ENCODE measurements at regions of chr14 and their contacts with region 1.

Region 1: GRCh38 chr14:74945823-74946682 is 9.3 kb downstream of the PGF start:
- DNase-seq: no peak
- H3K4me3 ChIP-seq: peak overlapping the region in 3 of 4 donors; percentile 1 to 30 (median 13)
- H3K27ac ChIP-seq: peak overlapping the region; percentile 20 to 66 (median 34)
- H3K4me1 ChIP-seq: peaks cover 34 to 38% (median 36%) of the 10 kb centered on the region in 4 donors
- H3K27me3 ChIP-seq: peaks cover 0 to 18% (median 0%) of the 10 kb centered on the region in 4 donors
- CTCF ChIP-seq: peak; percentile 91 to 99 (median 92)
- EP300 ChIP-seq: no peak
- POLR2A ChIP-seq: no peak

Region 2: GRCh38 chr14:75002392-75003249 is 56.6 kb after region 1 on chr14 and contains the start of gene EIF2B2:
- intact Hi-C with region 1: loop called (anchors 5 kb)
- DNase-seq: peak; percentile 100
- H3K4me3 ChIP-seq: peak within 1 kb of the TSS; percentile 77 to 92 (median 82)
- H3K27ac ChIP-seq: peak within 1 kb of the TSS; percentile 81 to 87 (median 82)
- H3K4me1 ChIP-seq: peaks cover 15 to 34% (median 25%) of the 10 kb centered on the region in 4 donors
- H3K27me3 ChIP-seq: no peaks in the 10 kb centered on the region
- CTCF ChIP-seq: peak in 2 of 3 experiments; percentile 28 to 37
- EP300 ChIP-seq: no peak
- POLR2A ChIP-seq: no peak
- total RNA-seq, gene EIF2B2: 23.3 to 58.0 (median 45.9) TPM

Region 3: DNA sequence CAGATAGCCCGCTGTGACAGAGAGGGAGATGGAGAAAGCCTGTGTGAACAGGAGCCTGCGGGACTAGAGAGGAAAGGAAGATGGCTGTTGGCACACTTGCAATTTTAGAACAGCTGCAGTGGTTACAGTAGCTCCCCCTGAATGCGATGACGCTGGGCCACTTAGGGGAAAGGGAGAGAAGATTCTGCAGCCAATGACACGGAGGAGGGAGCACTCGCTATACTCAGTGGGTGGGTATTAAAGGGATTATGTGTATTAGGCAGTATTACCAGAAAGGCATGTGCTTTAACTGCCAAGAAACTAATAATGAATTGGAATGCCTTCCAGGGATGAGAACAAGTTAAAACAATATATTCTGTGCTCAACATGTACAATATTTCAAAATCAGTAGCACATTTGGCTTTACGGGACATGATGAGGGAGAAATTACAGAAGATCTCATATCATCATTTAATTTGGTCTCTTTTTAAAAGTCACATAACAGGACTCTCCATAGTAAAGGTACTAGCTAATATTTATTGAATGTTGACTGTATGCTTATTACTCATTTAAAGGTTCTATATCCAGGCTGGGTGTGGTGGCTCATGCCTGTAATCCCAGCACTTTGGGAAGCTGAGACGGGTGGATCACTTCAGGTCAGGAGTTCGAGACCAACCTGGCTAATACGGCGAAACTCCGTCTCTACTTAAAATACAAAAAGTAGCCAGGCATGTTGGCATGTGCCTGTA is 296.7 kb after region 1 on chr14:
- intact Hi-C with region 1: no loop called
- DNase-seq: no peak
- H3K4me3 ChIP-seq: no peak overlapping the region
- H3K27ac ChIP-seq: peak overlapping the region; percentile 45 to 76 (median 64)
- H3K4me1 ChIP-seq: peaks cover 18 to 43% (median 35%) of the 10 kb centered on the region in 4 donors
- H3K27me3 ChIP-seq: no peaks in the 10 kb centered on the region
- CTCF ChIP-seq: no peak
- EP300 ChIP-seq: peak; percentile 87
- POLR2A ChIP-seq: no peak

Region 4: DNA sequence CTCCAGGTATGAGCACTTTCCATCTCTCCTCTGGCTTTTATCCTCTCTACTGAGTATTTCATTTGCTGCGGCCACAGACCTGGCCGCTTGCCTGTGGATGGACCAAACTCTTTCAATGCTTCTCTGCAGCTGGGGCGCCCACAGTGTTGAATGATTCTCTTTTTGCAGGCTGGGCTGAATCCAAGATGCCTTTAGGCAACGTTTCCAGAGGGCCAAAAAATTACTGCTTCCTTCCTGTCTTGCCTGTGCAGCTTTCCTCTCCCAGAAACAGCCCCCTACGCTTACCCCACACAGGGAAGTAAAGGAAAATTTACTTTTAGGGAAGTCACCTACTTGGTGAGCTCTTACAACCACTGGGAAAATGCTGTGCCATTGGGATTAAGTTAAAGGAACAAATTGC is 426.2 kb after region 1 on chr14:
- intact Hi-C with region 1: no loop called
- DNase-seq: peak; percentile 26
- H3K4me3 ChIP-seq: no peak overlapping the region
- H3K27ac ChIP-seq: no peak overlapping the region
- H3K4me1 ChIP-seq: peaks cover 0 to 7% (median 5%) of the 10 kb centered on the region in 4 donors
- H3K27me3 ChIP-seq: no peaks in the 10 kb centered on the region
- CTCF ChIP-seq: no peak
- EP300 ChIP-seq: no peak
- POLR2A ChIP-seq: no peak

Measured in esophagus muscularis mucosa (tissue), 4 donors.